HCT116 (cell line): ENCODE measurements at regions of chr4 and their contacts with region 1.

Region 1: GRCh38 chr4:101155368-101155767 is 192.0 kb downstream of the PPP3CA start:
- DNase-seq: peak; percentile 97
- ATAC-seq: peak; percentile 81
- H3K4me3 ChIP-seq: 0 out of 4 replicates have a peak overlapping the region, but pooled peaks of 1 of the 2 experiments have one; percentile 5
- H3K27ac ChIP-seq: peak overlapping the region; percentile 98
- H3K4me1 ChIP-seq: peaks cover 87 to 100% of the 10 kb centered on the region in 2 experiments
- H3K27me3 ChIP-seq: no peaks in the 10 kb centered on the region
- CTCF ChIP-seq: no peak
- POLR2A ChIP-seq: no peak
- RAD21 ChIP-seq: peak; percentile 14

Region 2: GRCh38 chr4:100907465-100908454 is 247.6 kb before region 1 on chr4:
- CTCF ChIA-PET with region 1: no interaction called
- POLR2A ChIA-PET with region 1: no interaction called
- RAD21 ChIA-PET with region 1: no interaction called
- intact Hi-C with region 1: loop called (anchors 5 kb)
- DNase-seq: no peak
- ATAC-seq: peak; percentile 63
- H3K4me3 ChIP-seq: no peak overlapping the region
- H3K27ac ChIP-seq: no peak overlapping the region
- H3K4me1 ChIP-seq: peaks cover 0 to 7% of the 10 kb centered on the region in 2 experiments; a peak in 2 of 4 replicates
- H3K27me3 ChIP-seq: no peaks in the 10 kb centered on the region
- CTCF ChIP-seq: peak; percentile 29 to 52 (median 47); a peak in 5 of 6 replicates
- POLR2A ChIP-seq: no peak
- RAD21 ChIP-seq: peak; percentile 69

Region 3: DNA sequence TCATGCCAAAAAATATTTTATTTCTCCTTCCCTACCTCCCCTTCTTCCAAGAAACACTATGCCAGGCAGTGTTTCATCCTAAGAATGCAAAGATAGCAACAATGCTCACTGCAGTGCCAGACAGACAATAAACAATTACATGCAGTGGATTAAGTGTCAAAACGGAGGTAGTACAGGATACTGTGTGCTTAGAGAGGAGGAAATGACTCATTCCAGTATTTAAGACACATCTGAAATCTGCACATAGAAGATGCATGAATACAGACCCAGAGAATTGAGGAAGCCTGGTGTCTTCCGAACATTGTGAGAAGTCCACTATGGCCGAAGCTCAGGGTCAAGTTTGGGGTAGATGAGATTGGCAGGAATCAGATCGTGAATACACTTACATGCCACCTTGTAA is 134.4 kb before region 1 on chr4:
- CTCF ChIA-PET with region 1: no interaction called
- POLR2A ChIA-PET with region 1: interaction called, 3 read pairs
- RAD21 ChIA-PET with region 1: no interaction called
- intact Hi-C with region 1: loop called (anchors 5 kb)
- DNase-seq: peak; percentile 79
- ATAC-seq: peak; percentile 67
- H3K4me3 ChIP-seq: peak overlapping the region in 1 of 2 experiments; percentile 29; a peak in 2 of 4 replicates
- H3K27ac ChIP-seq: peak overlapping the region; percentile 95
- H3K4me1 ChIP-seq: peaks cover 55 to 65% of the 10 kb centered on the region in 2 experiments
- H3K27me3 ChIP-seq: no peaks in the 10 kb centered on the region
- CTCF ChIP-seq: no peak
- POLR2A ChIP-seq: no peak
- RAD21 ChIP-seq: no peak

Region 4: GRCh38 chr4:101114936-101115372 is 40.4 kb before region 1 on chr4:
- CTCF ChIA-PET with region 1: no interaction called
- POLR2A ChIA-PET with region 1: interaction called, 6 read pairs
- RAD21 ChIA-PET with region 1: no interaction called
- intact Hi-C with region 1: loop called (anchors 2 kb)
- DNase-seq: peak; percentile 99
- ATAC-seq: peak; percentile 94
- H3K4me3 ChIP-seq: no peak overlapping the region; a peak in 1 of 4 replicates
- H3K27ac ChIP-seq: peak overlapping the region; percentile 96
- H3K4me1 ChIP-seq: peaks cover 56 to 83% of the 10 kb centered on the region in 2 experiments
- H3K27me3 ChIP-seq: no peaks in the 10 kb centered on the region
- CTCF ChIP-seq: no peak
- POLR2A ChIP-seq: no peak
- RAD21 ChIP-seq: peak; percentile 44; the same call in 1 of the 2 replicates

Region 5: DNA sequence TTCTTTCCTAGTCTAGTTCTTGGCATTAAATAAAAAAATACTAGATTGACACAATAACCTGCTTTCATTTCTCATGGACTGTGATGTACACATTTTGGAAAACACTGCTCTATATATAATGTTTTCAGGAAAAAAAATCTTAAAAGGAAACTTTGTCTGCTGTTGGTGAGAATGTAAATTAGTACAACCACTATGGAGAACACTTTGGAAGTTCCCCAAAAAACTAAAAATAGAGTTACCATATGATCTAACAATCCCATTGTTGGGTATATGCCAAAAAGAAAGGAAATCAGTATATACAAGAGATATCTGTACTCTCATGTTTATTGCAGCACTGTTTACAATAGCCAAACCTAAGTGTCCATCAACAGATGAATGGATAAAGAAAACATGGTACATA is 10.3 kb before region 1 on chr4:
- CTCF ChIA-PET with region 1: no interaction called
- POLR2A ChIA-PET with region 1: interaction called, 14 read pairs
- RAD21 ChIA-PET with region 1: no interaction called
- intact Hi-C with region 1: no loop called
- DNase-seq: no peak
- ATAC-seq: no peak
- H3K4me3 ChIP-seq: no peak overlapping the region
- H3K27ac ChIP-seq: peak overlapping the region; percentile 98
- H3K4me1 ChIP-seq: peaks cover 86 to 98% of the 10 kb centered on the region in 2 experiments
- H3K27me3 ChIP-seq: no peaks in the 10 kb centered on the region
- CTCF ChIP-seq: no peak
- POLR2A ChIP-seq: no peak
- RAD21 ChIP-seq: no peak

Region 6: GRCh38 chr4:101682946-101683345 is 527.6 kb after region 1 on chr4:
- CTCF ChIA-PET with region 1: no interaction called
- POLR2A ChIA-PET with region 1: no interaction called
- RAD21 ChIA-PET with region 1: no interaction called
- intact Hi-C with region 1: no loop called
- DNase-seq: no peak
- ATAC-seq: no peak
- H3K4me3 ChIP-seq: no peak overlapping the region
- H3K27ac ChIP-seq: no peak overlapping the region
- H3K4me1 ChIP-seq: no peaks in the 10 kb centered on the region
- H3K27me3 ChIP-seq: no peaks in the 10 kb centered on the region
- CTCF ChIP-seq: no peak
- POLR2A ChIP-seq: no peak
- RAD21 ChIP-seq: no peak